Activated CD4-positive, alpha-beta T cell treated with anti-CD3 and anti-CD28 coated beads for 36 hours (primary cell): ENCODE measurements at regions of chr3 and their contacts with region 1.

Region 1: DNA sequence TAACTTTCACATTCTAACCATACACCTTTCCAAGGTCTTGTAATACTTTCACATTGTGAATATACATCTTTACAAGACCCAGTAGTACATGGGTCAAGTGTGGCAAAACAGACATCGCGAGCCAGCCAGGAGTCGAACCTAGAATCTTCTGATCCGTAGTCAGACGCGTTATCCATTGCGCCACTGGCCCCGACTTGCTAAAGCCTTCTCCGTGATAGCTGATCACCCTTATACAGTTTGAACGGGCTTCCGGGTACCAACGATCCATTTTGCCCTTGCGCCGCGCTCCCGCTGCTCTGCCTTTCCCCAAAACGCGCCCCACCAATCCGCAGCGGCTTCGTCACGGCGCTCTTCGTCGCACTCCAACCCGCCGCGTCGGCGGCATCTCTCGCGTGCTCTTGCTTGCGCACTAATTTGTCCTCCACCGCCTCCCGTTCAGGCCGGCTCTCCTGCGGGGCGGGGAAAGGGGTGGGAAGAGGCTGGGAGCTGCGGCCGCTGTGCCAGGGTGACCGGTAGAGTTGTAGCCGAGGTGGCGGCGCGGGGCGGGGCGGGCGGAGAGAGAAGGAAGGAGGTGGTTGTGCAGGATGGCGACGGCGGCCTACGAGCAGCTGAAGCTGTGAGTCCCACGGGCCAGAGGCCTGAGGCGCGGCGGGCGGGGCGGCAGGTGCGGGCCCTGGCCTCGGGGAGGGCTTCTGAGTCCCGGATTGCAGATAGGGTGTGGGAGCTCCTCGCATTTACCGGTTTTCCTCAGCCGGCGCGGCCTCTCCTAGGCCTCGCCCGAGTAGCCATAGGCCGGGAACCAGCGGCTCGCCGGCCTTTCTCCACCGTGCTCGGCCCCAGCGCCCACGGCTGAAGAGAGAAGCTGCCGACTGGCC is at the start of gene SACM1L:
- DNase-seq: peak; percentile 98
- ATAC-seq: peak; percentile 85
- H3K4me3 Mint-ChIP-seq: peak within 1 kb of the TSS; percentile 79
- H3K27ac Mint-ChIP-seq: peak within 1 kb of the TSS; percentile 97
- H3K4me1 Mint-ChIP-seq: peaks cover 46% of the 10 kb centered on the region
- H3K27me3 Mint-ChIP-seq: peaks cover 2% of the 10 kb centered on the region
- total RNA-seq, gene SACM1L: 34.2 to 51.8 TPM

Region 2: DNA sequence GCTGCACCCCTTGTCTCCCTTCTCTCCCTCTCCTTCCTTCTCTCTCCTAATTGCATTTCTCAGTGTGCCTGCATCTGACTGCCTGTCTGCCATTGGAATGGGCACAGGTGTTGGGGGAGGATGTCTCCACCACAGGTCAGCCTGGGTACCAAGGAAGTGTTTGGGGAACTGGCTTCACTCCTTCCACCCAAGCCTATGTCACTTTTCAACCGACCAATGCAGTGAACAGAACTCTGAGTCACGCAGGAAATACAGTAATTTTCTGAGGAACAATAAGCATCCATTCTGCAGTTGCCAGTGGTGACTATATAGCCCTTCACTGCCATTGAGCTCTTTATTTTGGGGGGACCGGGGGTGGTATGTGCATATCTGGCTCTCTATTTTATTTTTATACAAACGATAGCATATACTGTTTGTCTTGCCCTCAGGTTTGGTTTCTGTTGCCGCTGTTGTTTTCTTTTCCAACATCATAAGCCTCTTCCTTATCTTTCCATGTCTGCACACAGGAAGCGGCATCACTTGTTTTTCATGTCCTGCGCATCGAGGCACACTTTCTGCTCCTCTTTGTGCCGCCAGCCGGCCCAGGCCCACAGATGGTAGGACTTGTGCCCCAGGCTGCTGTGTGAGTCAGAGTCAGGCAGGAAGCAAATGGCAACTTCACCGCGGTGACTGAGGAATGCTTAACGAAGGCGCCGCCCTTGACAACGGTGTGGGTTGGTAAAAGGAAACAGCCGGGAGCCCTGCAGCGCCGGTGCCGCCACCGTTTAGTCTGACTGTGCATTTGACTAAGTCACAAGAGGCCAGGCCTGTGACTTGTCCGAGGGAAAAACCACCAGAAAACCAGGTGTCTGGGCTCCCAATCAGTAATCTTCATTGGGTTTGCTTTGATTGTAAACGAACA is 521.9 kb before region 1 on chr3:
- CTCF ChIA-PET with region 1: no interaction called
- POLR2A ChIA-PET with region 1: no interaction called
- intact Hi-C with region 1: loop called in 1 of 2 experiments (anchors 1 kb)
- DNase-seq: peak; percentile 94
- ATAC-seq: peak; percentile 96
- H3K4me3 Mint-ChIP-seq: peak overlapping the region; percentile 63
- H3K27ac Mint-ChIP-seq: peak overlapping the region; percentile 98
- H3K4me1 Mint-ChIP-seq: peaks cover 37% of the 10 kb centered on the region
- H3K27me3 Mint-ChIP-seq: no peaks in the 10 kb centered on the region

Region 3: DNA sequence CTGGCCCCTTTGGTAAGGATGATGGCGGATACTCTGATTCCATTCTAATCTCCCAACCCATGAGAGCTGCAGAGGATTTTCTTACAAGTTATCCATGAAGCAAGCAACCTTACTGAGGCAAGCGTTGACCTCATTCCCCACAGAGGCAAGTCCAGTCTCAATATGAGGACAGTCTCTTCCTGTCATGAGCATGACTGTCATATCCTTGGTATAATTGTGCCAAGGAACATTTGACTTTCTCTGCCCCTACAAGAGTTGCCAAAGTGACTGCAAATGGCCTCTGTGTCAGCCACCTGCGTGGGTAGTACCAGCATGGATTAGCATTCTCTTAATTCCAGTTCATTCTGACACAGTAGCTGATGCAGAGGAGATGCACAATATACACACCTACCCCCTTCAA is 391.8 kb before region 1 on chr3:
- CTCF ChIA-PET with region 1: no interaction called
- POLR2A ChIA-PET with region 1: no interaction called
- intact Hi-C with region 1: no loop called
- DNase-seq: no peak
- ATAC-seq: no peak
- H3K4me3 Mint-ChIP-seq: no peak overlapping the region
- H3K27ac Mint-ChIP-seq: no peak overlapping the region
- H3K4me1 Mint-ChIP-seq: no peaks in the 10 kb centered on the region
- H3K27me3 Mint-ChIP-seq: peaks cover 17% of the 10 kb centered on the region

Region 4: DNA sequence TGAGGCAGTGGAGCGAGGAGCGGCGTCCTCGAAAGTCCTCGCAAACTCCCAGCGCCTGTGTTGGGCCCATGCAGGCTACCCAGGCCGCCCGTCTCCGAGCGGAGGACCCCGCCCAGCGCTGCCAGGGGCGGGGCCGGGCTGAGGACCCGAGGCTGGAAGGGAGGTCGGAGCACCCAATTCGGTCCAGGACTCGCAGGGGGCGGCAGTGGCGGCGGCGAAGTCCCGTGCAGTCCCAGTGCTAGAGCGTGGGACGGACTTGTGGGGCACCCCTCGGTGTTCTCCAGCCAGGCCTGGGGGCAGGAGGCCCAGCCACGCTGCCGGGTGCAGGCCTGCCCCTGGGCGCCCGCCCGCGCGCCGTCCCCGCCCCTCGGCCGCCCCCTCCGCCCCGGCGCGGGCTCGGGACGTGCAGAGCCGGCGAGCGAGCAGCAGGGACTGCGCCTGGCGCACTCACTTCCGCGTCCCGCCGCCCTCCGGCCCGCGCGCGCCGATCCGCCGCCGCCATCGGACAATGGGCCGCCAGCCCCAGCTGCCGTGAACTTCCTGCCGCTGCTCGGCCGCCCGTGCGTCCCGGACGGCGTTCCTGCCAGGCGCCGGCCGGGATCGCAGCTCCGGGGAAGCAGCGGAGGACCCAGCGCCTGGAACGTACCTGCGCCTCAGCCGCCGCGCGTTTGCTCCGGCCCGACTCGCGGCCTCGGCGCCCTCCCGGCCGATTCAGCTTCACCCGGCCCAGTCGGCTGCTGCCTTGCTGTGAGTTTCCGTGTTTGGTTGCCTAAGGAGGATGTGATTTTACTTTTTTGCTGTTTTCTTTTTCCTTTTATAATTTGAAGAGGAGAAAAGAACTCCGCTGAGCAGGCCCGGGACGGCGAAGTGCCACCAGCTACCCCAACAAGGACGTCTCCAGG is 95.2 kb before region 1 on chr3:
- CTCF ChIA-PET with region 1: interaction called, 4 read pairs
- POLR2A ChIA-PET with region 1: no interaction called
- intact Hi-C with region 1: loop called in 1 of 2 experiments (anchors 1 kb)
- DNase-seq: peak; percentile 82
- ATAC-seq: peak; percentile 81
- H3K4me3 Mint-ChIP-seq: peak overlapping the region; percentile 86
- H3K27ac Mint-ChIP-seq: peak overlapping the region; percentile 82
- H3K4me1 Mint-ChIP-seq: peaks cover 46% of the 10 kb centered on the region
- H3K27me3 Mint-ChIP-seq: no peaks in the 10 kb centered on the region

Region 5: DNA sequence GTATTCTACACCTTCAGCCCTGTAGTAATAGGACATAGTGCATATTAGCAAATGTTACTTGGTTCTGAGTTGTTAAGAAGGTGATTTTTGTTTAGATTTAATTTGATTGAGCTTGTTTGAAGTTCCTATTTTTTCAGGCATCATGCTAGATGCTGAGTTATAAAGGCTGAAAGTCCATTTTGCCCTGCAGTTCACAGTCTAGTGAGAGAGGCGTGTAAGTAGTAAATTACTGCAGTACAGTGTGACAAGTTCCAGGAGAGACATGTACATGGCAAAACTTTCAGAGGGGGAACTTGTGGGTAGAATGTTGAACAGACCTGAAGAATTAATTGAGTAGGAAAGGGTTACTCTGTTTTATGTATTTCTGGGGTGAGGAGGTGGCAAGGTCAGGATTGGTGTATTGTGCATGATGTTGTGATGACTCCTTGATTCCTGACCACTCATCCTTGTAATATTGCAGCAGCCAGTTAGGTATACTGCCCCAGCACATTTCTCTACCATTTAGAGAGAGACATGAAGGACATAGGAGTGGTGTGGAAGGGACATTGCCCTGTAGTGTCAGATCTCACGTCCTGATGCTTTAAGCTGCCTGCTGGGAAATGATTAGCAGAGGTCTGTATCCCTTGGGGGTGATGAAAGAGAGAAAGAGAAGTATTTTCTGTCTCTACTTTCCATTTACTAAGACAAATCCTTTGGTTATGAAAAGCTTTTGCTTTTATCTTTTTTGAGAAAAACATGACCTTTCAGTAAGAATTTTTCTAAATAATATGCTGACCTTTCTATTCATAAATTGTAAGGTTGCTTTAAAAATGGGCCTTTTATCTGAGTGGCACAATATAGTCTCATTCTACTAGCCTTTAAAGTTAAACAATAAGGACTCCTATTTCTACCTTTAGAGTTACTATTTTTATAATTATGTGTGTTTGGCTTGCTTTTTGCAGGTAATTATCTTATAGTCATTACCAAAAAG is 17.0 kb after region 1 on chr3:
- CTCF ChIA-PET with region 1: interaction called, 18 read pairs
- POLR2A ChIA-PET with region 1: no interaction called
- intact Hi-C with region 1: no loop called
- DNase-seq: no peak
- ATAC-seq: peak; percentile 82
- H3K4me3 Mint-ChIP-seq: no peak overlapping the region
- H3K27ac Mint-ChIP-seq: peak overlapping the region; percentile 13
- H3K4me1 Mint-ChIP-seq: peaks cover 31% of the 10 kb centered on the region
- H3K27me3 Mint-ChIP-seq: no peaks in the 10 kb centered on the region

Region 6: GRCh38 chr3:45915518-45916231 is 226.6 kb after region 1 on chr3:
- CTCF ChIA-PET with region 1: no interaction called
- POLR2A ChIA-PET with region 1: no interaction called
- intact Hi-C with region 1: loop called in 1 of 2 experiments (anchors 5 kb)
- DNase-seq: peak; percentile 88
- ATAC-seq: peak; percentile 94
- H3K4me3 Mint-ChIP-seq: peak overlapping the region; percentile 22
- H3K27ac Mint-ChIP-seq: peak overlapping the region; percentile 37
- H3K4me1 Mint-ChIP-seq: peaks cover 33% of the 10 kb centered on the region
- H3K27me3 Mint-ChIP-seq: peaks cover 33% of the 10 kb centered on the region

Region 7: GRCh38 chr3:46242120-46242519 is 553.0 kb after region 1 on chr3 and contains the start of gene CCR3:
- CTCF ChIA-PET with region 1: no interaction called
- POLR2A ChIA-PET with region 1: no interaction called
- intact Hi-C with region 1: no loop called
- DNase-seq: no peak
- ATAC-seq: no peak
- H3K4me3 Mint-ChIP-seq: no peak within 1 kb of the TSS
- H3K27ac Mint-ChIP-seq: no peak within 1 kb of the TSS
- H3K4me1 Mint-ChIP-seq: no peaks in the 10 kb centered on the region
- H3K27me3 Mint-ChIP-seq: peaks cover 19% of the 10 kb centered on the region
- total RNA-seq, gene CCR3: not detected